RWPE1 (cell line): ENCODE measurements at regions of chr17 and their contacts with region 1.

Region 1: DNA sequence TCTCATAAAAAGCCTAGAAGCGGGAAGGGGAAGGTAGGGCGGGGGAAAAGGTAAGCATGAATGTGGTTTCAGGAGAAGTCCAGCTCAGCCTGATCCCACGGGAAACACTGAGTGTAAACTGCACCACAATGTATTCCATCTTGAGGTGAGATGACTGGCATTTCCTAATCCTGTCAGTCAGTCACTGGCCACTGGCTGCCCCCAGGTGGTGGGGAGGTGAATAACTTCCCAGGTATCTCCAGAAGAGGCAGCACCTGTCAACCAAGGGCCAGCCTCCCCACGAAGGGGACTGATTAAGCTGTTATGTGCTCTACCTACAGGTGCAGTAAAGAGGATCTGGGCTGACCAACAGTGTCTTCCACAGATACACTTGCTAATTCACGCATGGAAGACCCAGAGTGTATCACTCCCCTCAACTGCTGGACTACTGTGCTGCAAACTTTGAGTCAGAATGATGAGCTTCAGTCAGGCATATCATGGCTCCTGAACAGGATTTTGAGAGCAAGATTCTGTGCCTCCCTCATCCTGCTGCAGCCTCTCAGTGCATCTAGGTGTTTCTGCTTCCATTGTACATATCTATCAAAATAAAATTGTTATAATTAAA is 108.5 kb upstream of the CCL2 start:
- DNase-seq: peak; percentile 59
- H3K27ac ChIP-seq: no peak overlapping the region
- CTCF ChIP-seq: peak; percentile 38

Region 2: DNA sequence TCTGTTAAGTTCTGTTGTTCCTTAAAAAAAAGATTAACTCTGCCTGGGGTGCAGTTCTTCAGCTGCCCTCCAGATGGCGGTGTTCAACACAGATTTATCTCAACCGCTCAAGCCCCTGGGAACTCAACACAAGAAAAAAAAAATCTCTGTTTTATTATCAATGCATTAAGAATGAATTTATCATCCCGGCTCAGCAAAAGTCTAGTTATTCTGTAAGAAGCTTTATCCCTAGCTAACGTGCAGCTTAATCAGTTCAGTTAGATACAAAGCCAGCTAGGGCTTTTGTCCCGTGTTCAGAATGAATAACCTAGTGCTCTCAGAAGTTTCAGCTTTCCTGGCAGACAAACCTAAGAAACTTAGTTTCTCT is 367.3 kb before region 1 on chr17:
- CTCF ChIA-PET with region 1: interaction called, 14 read pairs
- POLR2A ChIA-PET with region 1: no interaction called
- DNase-seq: peak; percentile 64
- H3K27ac ChIP-seq: no peak overlapping the region
- CTCF ChIP-seq: peak; percentile 94

Region 3: DNA sequence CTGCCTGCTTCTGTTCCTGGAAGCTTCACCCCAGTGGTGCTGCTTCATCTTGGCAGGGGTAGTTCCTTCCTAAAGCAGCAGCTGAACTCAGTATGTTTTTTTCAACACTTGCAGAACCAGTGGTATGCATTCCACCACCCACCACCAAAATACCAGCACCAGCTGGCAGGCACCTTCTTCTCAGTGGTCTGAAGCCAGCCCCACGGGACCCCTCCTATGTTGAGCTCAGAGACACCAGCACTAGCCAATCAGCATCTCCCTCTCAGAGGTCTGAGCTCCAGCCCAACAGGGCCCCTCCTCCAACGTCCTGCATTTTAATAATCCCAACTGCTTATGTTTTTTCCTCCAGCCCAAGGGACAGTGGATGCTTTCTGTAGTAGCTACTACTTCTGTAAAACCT is 191.1 kb before region 1 on chr17:
- CTCF ChIA-PET with region 1: no interaction called
- POLR2A ChIA-PET with region 1: no interaction called
- DNase-seq: no peak
- H3K27ac ChIP-seq: no peak overlapping the region
- CTCF ChIP-seq: no peak

Region 4: DNA sequence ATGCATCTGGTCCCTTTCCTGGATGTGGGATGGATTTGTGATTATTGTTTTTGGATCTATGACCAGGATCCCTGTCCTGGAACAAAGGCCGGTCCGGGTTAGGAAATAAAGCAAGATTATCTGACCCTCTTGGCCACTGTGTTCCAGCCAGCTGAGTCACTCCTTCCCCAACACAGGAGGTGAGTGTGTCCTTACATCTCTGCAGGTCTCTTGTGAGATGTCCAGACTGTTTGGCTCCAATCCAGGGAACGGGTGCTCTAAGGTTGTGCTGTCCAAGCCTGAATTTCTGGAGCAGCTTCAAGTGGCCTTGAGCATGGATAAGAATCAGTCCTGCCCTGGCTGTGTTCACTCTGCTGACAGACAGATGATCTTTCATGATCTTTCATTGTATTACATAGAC is 28.0 kb before region 1 on chr17:
- CTCF ChIA-PET with region 1: no interaction called
- POLR2A ChIA-PET with region 1: no interaction called
- DNase-seq: no peak
- H3K27ac ChIP-seq: no peak overlapping the region
- CTCF ChIP-seq: no peak